ENCODE measurements at regions of chr6 and their contacts with region 1.

Region 1: GRCh38 chr6:107786709-107787588 is 37.2 kb downstream of the SCML4 start:
- DNase-seq: peak; percentile 55
- ATAC-seq: peak; percentile 69
- H3K4me3 Mint-ChIP-seq: peak overlapping the region; percentile 27
- H3K27ac Mint-ChIP-seq: peak overlapping the region; percentile 73
- H3K4me1 Mint-ChIP-seq: peaks cover 84% of the 10 kb centered on the region
- H3K27me3 Mint-ChIP-seq: no peaks in the 10 kb centered on the region

Region 2: GRCh38 chr6:107618672-107619071 is 168.3 kb before region 1 on chr6:
- CTCF ChIA-PET with region 1: no interaction called
- POLR2A ChIA-PET with region 1: no interaction called
- intact Hi-C with region 1: no loop called
- DNase-seq: peak; percentile 71
- ATAC-seq: peak; percentile 97
- H3K4me3 Mint-ChIP-seq: no peak overlapping the region
- H3K27ac Mint-ChIP-seq: peak overlapping the region; percentile 16
- H3K4me1 Mint-ChIP-seq: peaks cover 21% of the 10 kb centered on the region
- H3K27me3 Mint-ChIP-seq: no peaks in the 10 kb centered on the region

Region 3: GRCh38 chr6:107731422-107732319 is 55.3 kb before region 1 on chr6:
- CTCF ChIA-PET with region 1: interaction called, 9 read pairs
- POLR2A ChIA-PET with region 1: interaction called, 4 read pairs
- intact Hi-C with region 1: loop called in 1 of 2 experiments (anchors 2 kb)
- DNase-seq: peak; percentile 46
- ATAC-seq: peak; percentile 20
- H3K4me3 Mint-ChIP-seq: peak overlapping the region; percentile 79
- H3K27ac Mint-ChIP-seq: peak overlapping the region; percentile 91
- H3K4me1 Mint-ChIP-seq: peaks cover 82% of the 10 kb centered on the region
- H3K27me3 Mint-ChIP-seq: no peaks in the 10 kb centered on the region

Region 4: GRCh38 chr6:107740496-107741190 is 46.3 kb before region 1 on chr6:
- CTCF ChIA-PET with region 1: interaction called, 4 read pairs
- POLR2A ChIA-PET with region 1: no interaction called
- intact Hi-C with region 1: loop called in 1 of 2 experiments (anchors 5 kb)
- DNase-seq: peak; percentile 53
- ATAC-seq: peak; percentile 68
- H3K4me3 Mint-ChIP-seq: peak overlapping the region; percentile 64
- H3K27ac Mint-ChIP-seq: peak overlapping the region; percentile 92
- H3K4me1 Mint-ChIP-seq: peaks cover 68% of the 10 kb centered on the region
- H3K27me3 Mint-ChIP-seq: no peaks in the 10 kb centered on the region

Region 5: DNA sequence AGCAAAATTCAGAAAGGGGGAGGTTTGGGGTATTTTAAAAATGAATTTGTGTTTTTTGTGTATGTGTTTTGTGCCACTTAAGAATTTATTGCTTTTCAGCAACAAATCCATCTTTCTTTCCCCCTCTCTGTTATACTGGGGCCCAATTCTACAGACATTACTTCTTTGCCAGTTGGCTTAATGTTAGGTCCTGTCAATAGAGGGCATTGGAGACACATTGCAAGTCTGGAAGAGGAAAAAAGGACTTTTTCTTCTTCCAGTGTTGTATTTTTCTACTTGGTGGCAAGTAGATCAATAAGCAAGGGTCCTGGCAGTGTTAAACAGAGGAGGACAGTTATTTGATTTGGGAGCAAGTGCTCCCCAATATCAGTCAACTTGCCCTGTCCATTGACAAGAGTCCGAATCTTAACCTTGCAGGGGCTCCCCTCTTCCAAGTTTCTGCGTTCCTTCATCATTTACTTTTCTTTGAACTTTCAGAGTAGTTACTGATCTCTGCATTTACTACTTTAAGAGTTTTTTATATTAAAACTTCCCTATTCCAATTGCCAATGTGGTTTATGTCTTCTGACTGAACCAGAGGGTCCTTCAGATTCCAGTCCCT is 13.7 kb after region 1 on chr6:
- CTCF ChIA-PET with region 1: interaction called, 17 read pairs
- POLR2A ChIA-PET with region 1: interaction called, 6 read pairs
- intact Hi-C with region 1: no loop called
- DNase-seq: no peak
- ATAC-seq: no peak
- H3K4me3 Mint-ChIP-seq: no peak overlapping the region
- H3K27ac Mint-ChIP-seq: peak overlapping the region; percentile 2
- H3K4me1 Mint-ChIP-seq: peaks cover 69% of the 10 kb centered on the region
- H3K27me3 Mint-ChIP-seq: no peaks in the 10 kb centered on the region

Region 6: GRCh38 chr6:107820338-107821261 is 33.7 kb after region 1 on chr6:
- CTCF ChIA-PET with region 1: interaction called, 5 read pairs
- POLR2A ChIA-PET with region 1: no interaction called
- intact Hi-C with region 1: loop called in 1 of 2 experiments (anchors 2 kb)
- DNase-seq: peak; percentile 60
- ATAC-seq: no peak
- H3K4me3 Mint-ChIP-seq: peak overlapping the region; percentile 87
- H3K27ac Mint-ChIP-seq: peak overlapping the region; percentile 98
- H3K4me1 Mint-ChIP-seq: peaks cover 84% of the 10 kb centered on the region
- H3K27me3 Mint-ChIP-seq: no peaks in the 10 kb centered on the region

Region 7: DNA sequence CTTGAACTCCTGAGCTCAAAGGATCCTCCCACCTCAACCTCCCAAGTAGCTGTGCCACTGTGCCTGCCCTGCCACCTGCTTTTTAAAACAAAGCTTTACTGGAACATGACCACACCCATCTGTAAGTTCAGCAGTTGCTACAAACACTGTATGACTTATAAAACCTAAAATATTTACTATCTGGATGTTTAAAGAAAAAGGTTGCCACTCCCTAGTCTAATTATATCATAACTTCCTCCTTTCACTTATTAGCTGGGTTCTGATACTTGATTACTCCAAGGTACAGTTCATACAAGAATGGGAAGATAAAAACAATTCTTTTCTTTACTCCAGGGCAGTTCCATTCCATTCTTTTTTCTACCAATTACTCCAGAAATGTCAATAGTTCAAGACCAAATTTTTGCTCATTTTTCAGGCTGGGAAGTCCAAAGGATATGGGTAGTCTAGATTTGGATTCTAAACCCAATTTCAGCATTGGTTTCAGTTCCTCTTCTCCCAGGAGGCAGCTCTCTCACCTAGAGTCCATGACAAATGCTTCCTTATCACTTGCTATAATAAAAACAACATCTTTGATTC is 108.0 kb after region 1 on chr6:
- CTCF ChIA-PET with region 1: no interaction called
- POLR2A ChIA-PET with region 1: no interaction called
- intact Hi-C with region 1: no loop called
- DNase-seq: no peak
- ATAC-seq: no peak
- H3K4me3 Mint-ChIP-seq: no peak overlapping the region
- H3K27ac Mint-ChIP-seq: no peak overlapping the region
- H3K4me1 Mint-ChIP-seq: no peaks in the 10 kb centered on the region
- H3K27me3 Mint-ChIP-seq: no peaks in the 10 kb centered on the region

Measured in activated CD4-positive, alpha-beta T cell treated with anti-CD3 and anti-CD28 coated beads for 36 hours (primary cell).